Caco-2 (cell line): ENCODE measurements at regions of chr9 and their contacts with region 1.

Region 1: DNA sequence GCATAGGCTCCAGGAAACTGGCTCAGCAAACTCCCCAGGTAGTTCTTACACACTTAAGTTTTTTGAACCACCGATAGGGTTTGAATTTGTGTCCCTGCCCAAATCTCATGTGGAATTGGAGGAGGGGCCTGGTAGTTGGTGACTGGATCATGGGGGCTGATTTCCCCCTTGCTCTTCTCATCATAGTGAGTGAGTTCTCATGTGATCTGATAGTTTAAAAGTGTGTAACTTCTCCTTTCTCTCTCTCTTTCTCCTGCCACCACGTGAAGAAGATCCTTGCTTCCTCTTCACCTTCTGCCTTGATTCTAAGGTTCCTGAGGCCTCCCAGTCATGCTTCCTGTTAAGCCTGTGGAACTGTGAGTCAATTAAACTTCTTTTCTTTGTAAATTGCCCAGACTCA is 22.4 kb upstream of the HACD4 start:
- DNase-seq: no peak
- H3K4me3 ChIP-seq: no peak overlapping the region
- H3K4me3 Mint-ChIP-seq: no peak overlapping the region
- H3K27ac Mint-ChIP-seq: no peak overlapping the region
- H3K4me1 ChIP-seq: no peaks in the 10 kb centered on the region
- H3K4me1 Mint-ChIP-seq: no peaks in the 10 kb centered on the region
- H3K27me3 ChIP-seq: no peaks in the 10 kb centered on the region
- H3K27me3 Mint-ChIP-seq: no peaks in the 10 kb centered on the region
- CTCF ChIP-seq: no peak

Region 2: DNA sequence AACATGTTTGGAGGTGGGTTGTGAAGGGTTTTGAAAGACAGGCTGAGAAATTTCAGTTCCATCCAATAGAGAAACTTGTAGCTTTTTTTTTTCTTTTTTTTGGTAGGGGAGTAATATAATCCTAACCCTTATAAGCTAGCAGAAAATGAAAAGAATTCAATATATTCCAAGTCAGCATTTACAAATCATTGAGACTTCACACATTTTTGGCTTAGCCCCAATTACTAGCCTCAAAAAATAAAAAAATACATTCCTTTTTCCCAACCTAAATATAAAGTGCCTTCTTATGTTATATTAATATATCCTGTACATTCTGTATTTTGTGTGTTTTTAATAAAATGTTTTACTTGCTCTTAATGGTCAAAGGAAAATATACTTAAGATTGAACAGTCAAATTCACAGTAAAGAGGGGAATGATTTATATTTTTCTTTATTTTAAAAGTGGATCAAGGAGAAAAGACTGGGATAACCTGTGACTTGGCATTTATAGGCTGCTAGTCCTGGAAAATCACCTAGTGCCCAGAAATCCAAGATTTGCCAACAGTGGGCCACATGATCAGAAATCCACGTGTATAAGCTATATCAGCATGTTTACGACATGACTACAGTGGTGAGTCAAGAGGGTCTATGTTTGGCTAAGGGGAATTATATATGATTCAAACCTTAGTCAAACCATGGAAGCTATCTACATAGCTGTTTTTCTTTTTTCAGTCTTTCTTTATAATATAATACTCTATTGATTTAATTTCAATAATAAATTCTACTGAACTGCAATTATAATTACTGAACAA is 37.0 kb before region 1 on chr9:
- CTCF ChIA-PET with region 1: no interaction called
- POLR2A ChIA-PET with region 1: no interaction called
- intact Hi-C with region 1: loop called (anchors 2 kb)
- DNase-seq: no peak
- H3K4me3 ChIP-seq: no peak overlapping the region
- H3K4me3 Mint-ChIP-seq: no peak overlapping the region
- H3K27ac Mint-ChIP-seq: no peak overlapping the region
- H3K4me1 ChIP-seq: no peaks in the 10 kb centered on the region
- H3K4me1 Mint-ChIP-seq: no peaks in the 10 kb centered on the region
- H3K27me3 ChIP-seq: no peaks in the 10 kb centered on the region
- H3K27me3 Mint-ChIP-seq: no peaks in the 10 kb centered on the region
- CTCF ChIP-seq: no peak